Transverse colon (tissue), 4 donors: ENCODE measurements at regions of chr6 and their contacts with region 1.

Region 1: GRCh38 chr6:42306439-42307140 is 88.9 kb upstream of the MRPS10 start:
- DNase-seq: no peak
- H3K4me3 ChIP-seq: no peak overlapping the region
- H3K27ac ChIP-seq: no peak overlapping the region
- H3K4me1 ChIP-seq: peaks cover 0 to 8% (median 0%) of the 10 kb centered on the region in 4 donors
- H3K27me3 ChIP-seq: no peaks in the 10 kb centered on the region
- CTCF ChIP-seq: no peak
- EP300 ChIP-seq: no peak
- POLR2A ChIP-seq: no peak

Region 2: GRCh38 chr6:42350911-42351310 is 44.3 kb after region 1 on chr6:
- in situ Hi-C with region 1: no loop called
- intact Hi-C with region 1: loop called (anchors 1 kb)
- DNase-seq: no peak
- H3K4me3 ChIP-seq: no peak overlapping the region
- H3K27ac ChIP-seq: no peak overlapping the region
- H3K4me1 ChIP-seq: no peaks in the 10 kb centered on the region
- H3K27me3 ChIP-seq: no peaks in the 10 kb centered on the region
- CTCF ChIP-seq: no peak
- EP300 ChIP-seq: no peak
- POLR2A ChIP-seq: no peak

Region 3: DNA sequence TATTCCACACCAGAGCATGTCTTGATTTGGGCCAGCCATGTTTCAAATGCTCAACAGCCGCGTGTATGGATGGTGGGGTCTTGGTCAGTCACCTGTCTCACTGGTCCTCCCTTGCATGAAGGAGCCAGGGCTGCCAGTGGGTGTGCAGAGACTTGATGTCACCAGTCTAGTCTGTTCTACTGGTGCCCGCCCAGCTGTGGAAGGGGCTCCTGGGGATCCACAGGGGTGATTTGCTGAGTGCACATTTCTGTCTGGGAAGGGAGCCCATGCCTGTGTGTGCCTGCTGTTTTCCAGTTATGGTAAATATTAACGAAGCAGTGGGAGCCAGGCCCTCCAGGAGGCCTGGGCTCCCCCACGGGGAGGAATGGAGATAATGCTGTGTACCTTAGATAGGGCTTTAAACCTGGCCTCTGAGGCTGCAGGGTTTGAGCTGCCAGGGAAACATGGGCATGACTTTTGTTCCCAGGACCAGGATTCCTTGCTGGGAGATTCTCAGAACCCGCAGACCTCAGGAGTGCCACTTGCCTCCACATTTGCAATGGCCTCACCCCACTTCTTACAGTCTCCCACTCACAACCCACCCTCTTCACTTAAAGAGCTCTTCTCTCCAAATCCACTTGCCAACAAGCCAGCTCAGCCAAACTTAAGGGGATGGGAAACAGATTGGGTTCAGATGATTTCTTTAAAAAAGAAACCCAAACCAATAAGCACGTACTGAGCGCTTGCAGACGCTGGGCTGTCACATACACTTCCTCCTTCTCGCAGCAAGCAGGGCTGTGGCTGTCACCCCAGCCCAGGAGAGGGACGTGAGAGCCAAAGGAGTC is 1517.5 kb after region 1 on chr6:
- in situ Hi-C with region 1: no loop called
- intact Hi-C with region 1: loop called (anchors 5 kb)
- DNase-seq: no peak
- H3K4me3 ChIP-seq: no peak overlapping the region
- H3K27ac ChIP-seq: peak overlapping the region; percentile 30 to 62 (median 44)
- H3K4me1 ChIP-seq: peaks cover 0 to 18% (median 4%) of the 10 kb centered on the region in 4 donors
- H3K27me3 ChIP-seq: no peaks in the 10 kb centered on the region
- CTCF ChIP-seq: no peak
- EP300 ChIP-seq: no peak
- POLR2A ChIP-seq: no peak